Stomach (tissue), 19 donors: ENCODE measurements at regions of chr16 and their contacts with region 1.

Region 1: GRCh38 chr16:47037746-47038458 is 64.4 kb upstream of the DNAJA2 start:
- DNase-seq: peak; percentile 92 to 94
- H3K4me3 ChIP-seq: peak overlapping the region; percentile 66 to 81 (median 71)
- H3K27ac ChIP-seq: peak overlapping the region in 4 of 5 donors; percentile 44 to 78 (median 59)
- H3K4me1 ChIP-seq: peaks cover 3 to 14% (median 6%) of the 10 kb centered on the region in 4 donors
- H3K27me3 ChIP-seq: no peaks in the 10 kb centered on the region
- CTCF ChIP-seq: peak in 5 of 7 experiments; percentile 54 to 91 (median 87)
- EP300 ChIP-seq: no peak
- POLR2A ChIP-seq: no peak

Region 2: GRCh38 chr16:47299587-47299986 is 261.7 kb after region 1 on chr16:
- intact Hi-C with region 1: no loop called
- DNase-seq: no peak
- H3K4me3 ChIP-seq: no peak overlapping the region
- H3K27ac ChIP-seq: no peak overlapping the region
- H3K4me1 ChIP-seq: no peaks in the 10 kb centered on the region
- H3K27me3 ChIP-seq: no peaks in the 10 kb centered on the region
- CTCF ChIP-seq: no peak
- EP300 ChIP-seq: no peak
- POLR2A ChIP-seq: no peak

Region 3: GRCh38 chr16:48164907-48165726 is 1127.2 kb after region 1 on chr16:
- intact Hi-C with region 1: loop called (anchors 10 kb)
- DNase-seq: peak; percentile 80 to 87
- H3K4me3 ChIP-seq: no peak overlapping the region
- H3K27ac ChIP-seq: peak overlapping the region in 3 of 5 donors; percentile 18 to 52 (median 46)
- H3K4me1 ChIP-seq: peaks cover 0 to 18% (median 11%) of the 10 kb centered on the region in 4 donors
- H3K27me3 ChIP-seq: no peaks in the 10 kb centered on the region
- CTCF ChIP-seq: peak in 5 of 7 experiments; percentile 71 to 90 (median 78)
- EP300 ChIP-seq: no peak
- POLR2A ChIP-seq: no peak